Activated CD4-positive, alpha-beta T cell treated with anti-CD3 and anti-CD28 coated beads for 36 hours (primary cell): ENCODE measurements at regions of chr2 and their contacts with region 1.

Region 1: GRCh38 chr2:118032169-118033013 is 18.5 kb upstream of the CCDC93 start:
- DNase-seq: peak; percentile 65
- ATAC-seq: peak; percentile 83
- H3K4me3 Mint-ChIP-seq: no peak overlapping the region
- H3K27ac Mint-ChIP-seq: no peak overlapping the region
- H3K4me1 Mint-ChIP-seq: no peaks in the 10 kb centered on the region
- H3K27me3 Mint-ChIP-seq: peaks cover 34% of the 10 kb centered on the region

Region 2: DNA sequence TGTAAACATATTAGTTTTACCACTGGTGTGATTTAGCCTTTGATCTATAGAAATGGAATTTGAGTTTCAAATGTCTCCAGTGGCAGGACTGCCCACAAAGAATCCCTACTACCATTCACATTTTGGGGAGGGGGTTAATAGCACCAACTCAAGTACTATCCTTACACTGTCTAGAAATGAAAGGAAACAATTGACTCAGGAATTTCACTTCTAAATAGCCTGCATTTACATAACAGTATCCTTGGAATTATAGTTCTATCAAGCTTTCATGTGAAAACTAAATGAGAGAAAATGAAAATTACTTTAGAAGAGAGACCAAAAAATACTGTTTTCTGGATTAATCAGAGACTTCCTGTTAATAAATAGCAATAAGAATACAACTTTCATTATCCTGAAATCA is 11.0 kb before region 1 on chr2:
- CTCF ChIA-PET with region 1: interaction called, 11 read pairs
- POLR2A ChIA-PET with region 1: no interaction called
- intact Hi-C with region 1: no loop called
- DNase-seq: no peak
- ATAC-seq: no peak
- H3K4me3 Mint-ChIP-seq: no peak overlapping the region
- H3K27ac Mint-ChIP-seq: no peak overlapping the region
- H3K4me1 Mint-ChIP-seq: peaks cover 9% of the 10 kb centered on the region
- H3K27me3 Mint-ChIP-seq: peaks cover 5% of the 10 kb centered on the region

Region 3: GRCh38 chr2:118061135-118061955 is 29.0 kb after region 1 on chr2:
- CTCF ChIA-PET with region 1: interaction called, 13 read pairs
- POLR2A ChIA-PET with region 1: no interaction called
- intact Hi-C with region 1: loop called in 1 of 2 experiments (anchors 1 kb)
- DNase-seq: no peak
- ATAC-seq: no peak
- H3K4me3 Mint-ChIP-seq: no peak overlapping the region
- H3K27ac Mint-ChIP-seq: no peak overlapping the region
- H3K4me1 Mint-ChIP-seq: peaks cover 10% of the 10 kb centered on the region
- H3K27me3 Mint-ChIP-seq: peaks cover 22% of the 10 kb centered on the region

Region 4: DNA sequence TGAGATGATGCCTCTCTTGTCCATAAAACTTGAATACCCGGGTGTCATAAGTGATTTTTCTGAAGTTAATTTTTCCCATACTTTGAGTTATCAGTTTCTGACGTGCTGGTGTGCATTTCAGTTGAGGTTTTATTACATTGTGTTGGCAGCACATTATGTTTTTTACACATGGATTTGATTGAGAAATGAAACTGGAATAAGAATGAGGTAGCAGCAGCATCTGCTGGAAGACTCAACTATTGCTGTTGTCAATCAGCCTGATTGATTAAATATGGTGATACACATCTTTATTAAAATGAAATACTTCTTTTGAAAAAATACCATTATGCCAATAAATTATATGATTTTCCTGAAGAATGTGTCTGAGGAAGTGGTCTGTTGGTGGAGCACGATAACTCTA is 116.4 kb after region 1 on chr2:
- CTCF ChIA-PET with region 1: interaction called, 3 read pairs
- POLR2A ChIA-PET with region 1: no interaction called
- intact Hi-C with region 1: loop called (anchors 5 kb)
- DNase-seq: no peak
- ATAC-seq: no peak
- H3K4me3 Mint-ChIP-seq: no peak overlapping the region
- H3K27ac Mint-ChIP-seq: no peak overlapping the region
- H3K4me1 Mint-ChIP-seq: peaks cover 6% of the 10 kb centered on the region
- H3K27me3 Mint-ChIP-seq: peaks cover 11% of the 10 kb centered on the region

Region 5: GRCh38 chr2:118548880-118549488 is 516.6 kb after region 1 on chr2:
- CTCF ChIA-PET with region 1: no interaction called
- POLR2A ChIA-PET with region 1: no interaction called
- intact Hi-C with region 1: no loop called
- DNase-seq: no peak
- ATAC-seq: no peak
- H3K4me3 Mint-ChIP-seq: no peak overlapping the region
- H3K27ac Mint-ChIP-seq: no peak overlapping the region
- H3K4me1 Mint-ChIP-seq: no peaks in the 10 kb centered on the region
- H3K27me3 Mint-ChIP-seq: peaks cover 2% of the 10 kb centered on the region